ENCODE measurements at regions of chr14 and their contacts with region 1.

Region 1: GRCh38 chr14:75258615-75259466 is 19.8 kb upstream of the FOS start:
- DNase-seq: peak; percentile 99 to 100 (median 100)
- ATAC-seq: peak; percentile 89 to 93 (median 91)
- H3K4me3 ChIP-seq: peak overlapping the region in 2 of 4 donors; percentile 34 to 40
- H3K27ac ChIP-seq: peak overlapping the region; percentile 98 to 99 (median 98)
- H3K4me1 ChIP-seq: peaks cover 29 to 37% (median 37%) of the 10 kb centered on the region in 3 donors
- H3K27me3 ChIP-seq: no peaks in the 10 kb centered on the region
- CTCF ChIP-seq: no peak

Region 2: GRCh38 chr14:75158843-75159614 is 99.8 kb before region 1 on chr14:
- intact Hi-C with region 1: loop called in 1 of 3 experiments (anchors 10 kb)
- DNase-seq: no peak
- ATAC-seq: peak in 1 of 4 donors; percentile 40
- H3K4me3 ChIP-seq: no peak overlapping the region
- H3K27ac ChIP-seq: no peak overlapping the region
- H3K4me1 ChIP-seq: peaks cover 12 to 18% (median 16%) of the 10 kb centered on the region in 3 donors
- H3K27me3 ChIP-seq: no peaks in the 10 kb centered on the region
- CTCF ChIP-seq: no peak

Measured in pancreas (tissue), 10 donors.